ENCODE measurements at regions of chr11 and their contacts with region 1.

Region 1: DNA sequence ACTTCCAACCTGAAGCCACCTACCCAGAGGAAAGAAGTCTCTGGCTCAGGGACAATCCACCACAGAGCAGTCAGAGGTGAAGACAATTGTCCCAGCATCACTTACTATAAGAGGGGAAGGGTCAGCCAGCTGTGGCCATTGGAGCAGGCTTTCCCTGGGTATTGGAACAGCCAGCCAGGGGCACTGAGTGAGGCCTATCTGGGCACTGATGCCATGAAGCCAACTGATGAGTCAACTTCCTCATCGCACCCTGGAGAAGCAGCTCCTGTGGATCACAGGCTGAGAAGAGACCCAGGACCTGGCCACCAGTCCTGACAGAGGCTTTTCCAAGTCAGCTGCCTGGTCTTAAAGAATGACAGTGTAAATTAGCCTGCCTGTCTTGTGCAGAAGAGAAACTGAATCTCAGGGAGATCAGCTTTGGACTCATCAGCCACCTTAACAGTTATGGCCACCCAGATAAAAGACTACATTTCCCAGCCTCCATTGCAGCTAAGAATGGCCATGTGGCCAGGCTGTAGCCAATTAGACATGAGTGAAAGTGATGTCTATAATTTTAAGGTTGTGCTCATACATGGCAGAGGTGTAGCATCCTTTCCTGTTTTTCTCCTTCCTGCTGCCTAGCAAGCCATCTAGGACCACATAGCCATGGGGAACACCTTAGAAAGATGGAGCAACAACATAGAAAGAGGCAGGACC is 19.0 kb downstream of the CHST1 start:
- DNase-seq: no peak
- H3K4me3 ChIP-seq: no peak overlapping the region
- H3K27ac ChIP-seq: no peak overlapping the region
- H3K4me1 ChIP-seq: no peaks in the 10 kb centered on the region
- H3K27me3 ChIP-seq: no peaks in the 10 kb centered on the region
- CTCF ChIP-seq: no peak

Region 2: GRCh38 chr11:45484326-45484883 is 162.0 kb before region 1 on chr11:
- intact Hi-C with region 1: no loop called
- DNase-seq: peak in 1 of 2 donors; percentile 45
- H3K4me3 ChIP-seq: no peak overlapping the region
- H3K27ac ChIP-seq: no peak overlapping the region
- H3K4me1 ChIP-seq: no peaks in the 10 kb centered on the region
- H3K27me3 ChIP-seq: no peaks in the 10 kb centered on the region
- CTCF ChIP-seq: no peak

Region 3: GRCh38 chr11:45688472-45689033 is 42.1 kb after region 1 on chr11:
- intact Hi-C with region 1: loop called (anchors 5 kb)
- DNase-seq: no peak
- H3K4me3 ChIP-seq: no peak overlapping the region
- H3K27ac ChIP-seq: no peak overlapping the region
- H3K4me1 ChIP-seq: no peaks in the 10 kb centered on the region
- H3K27me3 ChIP-seq: no peaks in the 10 kb centered on the region
- CTCF ChIP-seq: no peak

Measured in ascending aorta (tissue), 2 donors.